ENCODE measurements at regions of chr18 and their contacts with region 1.

Region 1: DNA sequence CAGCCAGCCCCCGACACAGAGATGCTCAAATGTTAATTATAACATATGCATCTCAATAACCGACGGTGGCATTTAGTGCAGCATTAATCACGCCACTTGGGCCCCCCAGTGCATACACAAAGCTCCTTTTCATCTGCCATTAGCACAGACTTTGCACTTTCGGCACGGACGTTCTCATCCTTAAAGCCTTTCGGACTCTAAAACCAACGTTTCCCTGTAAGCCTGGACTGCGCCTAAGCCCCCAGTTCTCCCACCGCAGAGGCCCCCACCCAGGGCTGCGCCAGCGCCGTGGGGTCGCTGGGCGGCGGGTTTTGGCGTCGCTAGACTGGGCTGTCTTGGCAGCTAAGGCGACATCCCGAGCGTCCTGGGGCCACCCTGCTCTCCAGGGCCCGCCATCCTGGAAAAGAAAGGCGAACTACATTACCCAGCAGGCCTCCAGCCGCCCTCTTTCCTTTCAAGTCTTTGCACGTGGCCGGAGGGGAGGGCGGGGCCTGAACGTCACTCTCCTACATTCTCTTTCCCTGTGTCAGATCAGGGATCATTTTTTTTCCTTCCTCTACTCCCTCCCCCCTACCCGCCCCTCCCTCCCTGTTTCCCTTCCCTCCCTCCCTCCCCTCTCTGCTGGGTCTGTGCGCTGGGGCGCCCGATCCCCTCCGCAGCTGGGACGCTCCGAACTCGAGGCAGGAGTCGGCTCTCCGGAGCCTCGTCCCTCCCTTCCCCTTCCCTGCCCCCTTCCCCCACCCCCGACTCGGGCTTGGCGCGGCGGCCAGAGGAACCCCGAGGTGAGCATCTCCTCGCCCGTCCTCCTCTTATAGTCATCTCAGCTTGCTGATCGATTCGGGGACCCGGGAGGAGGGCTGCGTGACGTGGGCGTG is at the start of gene CTIF:
- DNase-seq: peak; percentile 96
- ATAC-seq: peak; percentile 77
- H3K4me3 Mint-ChIP-seq: peak within 1 kb of the TSS; percentile 81
- H3K27ac Mint-ChIP-seq: peak within 1 kb of the TSS; percentile 78
- H3K4me1 Mint-ChIP-seq: peaks cover 46% of the 10 kb centered on the region
- H3K27me3 Mint-ChIP-seq: peaks cover 18% of the 10 kb centered on the region
- CTCF ChIP-seq: no peak
- total RNA-seq, gene CTIF: 18.9 to 28.5 TPM (median 20.4 TPM) in 3 replicates

Region 2: GRCh38 chr18:48663931-48664847 is 125.4 kb after region 1 on chr18:
- CTCF ChIA-PET with region 1: interaction called, 13 read pairs
- POLR2A ChIA-PET with region 1: no interaction called
- DNase-seq: peak; percentile 92
- ATAC-seq: peak; percentile 66
- H3K4me3 Mint-ChIP-seq: no peak overlapping the region
- H3K27ac Mint-ChIP-seq: no peak overlapping the region
- H3K4me1 Mint-ChIP-seq: peaks cover 18% of the 10 kb centered on the region
- H3K27me3 Mint-ChIP-seq: no peaks in the 10 kb centered on the region
- CTCF ChIP-seq: peak; percentile 94